ENCODE measurements at regions of chr2 and their contacts with region 1.

Region 1: GRCh38 chr2:189661148-189661956 is at the start of gene ASNSD1:
- DNase-seq: peak; percentile 97
- ATAC-seq: peak; percentile 95
- H3K4me3 Mint-ChIP-seq: no peak within 1 kb of the TSS
- H3K27ac Mint-ChIP-seq: no peak within 1 kb of the TSS
- H3K4me1 Mint-ChIP-seq: peaks cover 25% of the 10 kb centered on the region
- H3K27me3 Mint-ChIP-seq: no peaks in the 10 kb centered on the region
- CTCF ChIP-seq: peak; percentile 97
- total RNA-seq, gene ASNSD1: 27.5 and 31.1 TPM in 2 replicates

Region 2: DNA sequence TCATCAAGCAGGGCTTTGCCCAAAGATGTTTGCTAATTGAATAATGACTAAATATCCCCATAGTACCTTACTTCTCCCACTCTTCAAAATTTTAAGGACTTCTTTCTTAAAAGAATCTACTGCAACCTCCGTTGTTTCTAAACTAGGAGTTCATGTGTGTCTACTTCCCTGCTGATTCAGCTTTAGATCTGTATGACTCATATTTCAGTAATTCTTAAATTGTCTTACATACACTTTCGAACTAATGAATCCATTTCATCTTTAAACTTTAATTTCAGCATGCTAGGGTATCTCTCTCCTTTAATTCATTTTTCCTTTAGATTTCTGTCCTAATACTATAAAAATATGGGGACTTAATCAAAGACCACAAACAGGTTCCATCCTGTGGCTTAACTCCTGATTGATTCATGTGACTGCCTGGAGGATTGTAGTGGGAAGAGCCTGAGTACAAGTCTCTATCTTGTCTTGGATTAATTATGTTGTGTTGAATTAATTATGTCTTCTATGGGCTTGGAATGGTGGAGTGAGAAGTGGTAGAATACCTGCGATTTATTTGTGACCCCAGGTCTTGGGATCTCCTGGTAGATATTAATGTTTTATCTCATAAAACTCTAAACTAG is 456.9 kb before region 1 on chr2:
- CTCF ChIA-PET with region 1: no interaction called
- POLR2A ChIA-PET with region 1: no interaction called
- intact Hi-C with region 1: no loop called
- DNase-seq: no peak
- ATAC-seq: no peak
- H3K4me3 Mint-ChIP-seq: no peak overlapping the region
- H3K27ac Mint-ChIP-seq: no peak overlapping the region
- H3K4me1 Mint-ChIP-seq: no peaks in the 10 kb centered on the region
- H3K27me3 Mint-ChIP-seq: no peaks in the 10 kb centered on the region
- CTCF ChIP-seq: no peak

Region 3: DNA sequence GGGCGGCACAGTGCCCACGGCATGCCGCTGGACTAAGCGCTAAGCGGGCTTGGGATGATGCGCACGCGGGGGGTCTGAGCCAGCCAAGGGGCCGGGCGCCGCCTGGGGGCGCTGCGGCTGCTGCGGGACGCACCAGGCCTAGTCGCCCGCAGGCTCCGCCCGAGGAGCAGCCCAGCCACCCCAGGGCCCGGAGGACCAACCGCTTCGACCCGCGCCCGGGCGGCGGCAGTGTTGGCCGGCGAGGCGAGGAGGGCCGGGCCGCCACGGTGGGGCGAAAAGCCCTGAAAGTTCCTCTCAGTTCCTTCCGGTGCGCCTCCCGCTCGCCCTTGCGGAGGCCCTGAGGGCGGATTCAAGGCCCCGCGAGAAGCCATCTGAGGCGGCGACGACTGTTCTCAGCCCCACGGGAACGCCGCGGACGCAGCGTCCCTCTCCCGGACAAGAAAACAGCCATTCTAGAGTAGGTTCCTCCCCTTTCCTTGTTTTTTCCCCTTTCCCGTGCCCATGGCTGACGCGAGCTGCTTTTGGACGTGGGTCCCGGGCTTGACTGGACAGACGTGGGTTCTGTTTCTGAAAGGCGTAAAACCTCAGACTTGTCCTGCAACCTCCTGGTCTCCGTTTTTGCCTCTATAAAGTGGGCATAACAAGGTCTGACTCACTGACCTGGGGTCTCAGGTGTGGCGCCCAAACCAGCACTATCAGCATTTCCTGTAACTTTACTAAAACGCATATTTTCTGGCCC is 13.2 kb after region 1 on chr2 and contains the start of gene ANKAR:
- CTCF ChIA-PET with region 1: interaction called, 52 read pairs
- POLR2A ChIA-PET with region 1: interaction called, 37 read pairs
- intact Hi-C with region 1: loop called (anchors 1 kb)
- DNase-seq: peak; percentile 89
- ATAC-seq: peak; percentile 97
- H3K4me3 Mint-ChIP-seq: peak within 1 kb of the TSS; percentile 96
- H3K27ac Mint-ChIP-seq: peak within 1 kb of the TSS; percentile 99
- H3K4me1 Mint-ChIP-seq: peaks cover 38% of the 10 kb centered on the region
- H3K27me3 Mint-ChIP-seq: no peaks in the 10 kb centered on the region
- CTCF ChIP-seq: peak; percentile 67
- total RNA-seq, gene ANKAR: 13.1 and 14.5 TPM in 2 replicates

Region 4: DNA sequence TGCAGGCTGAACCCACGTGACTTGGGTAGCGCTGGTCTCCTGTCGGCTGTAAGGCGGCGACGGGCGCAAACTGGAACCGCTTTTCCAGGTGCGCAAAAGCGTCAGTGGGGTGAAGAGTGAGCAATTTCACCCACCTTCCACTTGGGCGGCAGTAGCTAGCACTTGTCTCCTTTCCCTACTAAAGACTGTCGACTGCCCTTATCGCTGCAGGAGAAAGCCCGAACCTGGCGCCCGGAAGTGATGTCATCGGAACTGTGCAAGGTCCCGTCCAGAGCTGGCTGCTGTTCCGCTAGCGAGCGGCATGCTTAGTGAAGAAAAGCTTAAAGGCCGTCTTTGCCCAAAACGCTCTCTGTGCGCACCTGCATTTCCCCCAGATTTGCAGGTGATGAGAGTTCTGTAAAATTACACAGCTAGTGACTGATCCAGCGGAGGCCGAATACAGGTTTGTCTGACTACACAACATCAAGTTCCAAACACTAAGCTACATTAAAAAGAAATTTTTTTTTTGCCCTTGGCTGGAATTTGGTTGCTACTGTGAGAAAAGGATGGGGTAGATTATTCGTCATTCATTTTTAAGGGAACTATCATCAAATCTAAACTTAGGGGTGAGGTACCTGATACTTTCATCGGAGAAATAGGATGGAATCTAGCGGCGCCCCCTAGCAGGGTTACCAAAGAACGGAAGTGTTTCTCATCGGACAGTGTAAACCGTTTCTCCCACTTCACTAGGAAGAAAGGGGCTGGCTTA is 101.4 kb after region 1 on chr2 and contains the start of gene OSGEPL1:
- CTCF ChIA-PET with region 1: interaction called, 8 read pairs
- POLR2A ChIA-PET with region 1: interaction called, 16 read pairs
- intact Hi-C with region 1: loop called (anchors 1 kb)
- DNase-seq: peak; percentile 81
- ATAC-seq: peak; percentile 93
- H3K4me3 Mint-ChIP-seq: peak within 1 kb of the TSS; percentile 95
- H3K27ac Mint-ChIP-seq: peak within 1 kb of the TSS; percentile 97
- H3K4me1 Mint-ChIP-seq: peaks cover 8% of the 10 kb centered on the region
- H3K27me3 Mint-ChIP-seq: no peaks in the 10 kb centered on the region
- CTCF ChIP-seq: no peak
- total RNA-seq, gene OSGEPL1: 10.6 and 12.3 TPM in 2 replicates

Region 5: DNA sequence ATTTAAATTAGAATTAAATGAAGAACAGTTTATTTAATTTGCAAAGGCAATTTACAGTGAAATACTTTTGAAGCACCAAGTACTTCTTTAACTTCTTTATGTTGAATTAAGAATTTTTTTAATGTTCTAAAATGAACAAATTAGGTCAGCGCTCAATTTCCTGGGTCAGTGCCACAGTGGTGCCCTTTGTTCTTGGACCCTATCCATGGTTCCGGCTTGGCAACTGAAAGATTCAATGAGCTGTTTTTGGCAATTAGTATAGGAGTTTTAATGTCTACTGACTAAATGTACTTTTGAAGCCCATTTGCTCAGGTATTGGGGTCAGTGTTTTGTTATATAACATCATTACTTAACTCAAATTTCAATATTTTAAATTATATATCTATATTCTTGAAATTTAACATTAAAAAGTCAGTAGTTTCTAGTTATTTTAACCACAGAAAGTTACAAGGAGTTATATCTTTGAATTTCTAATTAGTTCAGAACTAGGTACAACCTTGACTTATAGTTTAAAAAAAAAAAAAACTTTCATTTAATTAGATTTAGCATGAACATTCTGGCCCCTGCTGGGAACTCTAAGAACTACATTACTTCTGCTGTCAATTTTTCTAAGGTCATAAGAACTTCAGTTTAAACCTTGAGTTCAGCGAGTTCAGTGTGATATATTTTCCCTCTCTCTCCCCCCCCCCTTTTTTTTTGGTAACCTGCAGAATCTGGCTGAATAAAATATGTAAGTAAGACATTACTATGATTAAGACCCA is 408.8 kb after region 1 on chr2:
- CTCF ChIA-PET with region 1: interaction called, 4 read pairs
- POLR2A ChIA-PET with region 1: no interaction called
- intact Hi-C with region 1: loop called (anchors 1 kb)
- DNase-seq: no peak
- ATAC-seq: peak; percentile 61
- H3K4me3 Mint-ChIP-seq: no peak overlapping the region
- H3K27ac Mint-ChIP-seq: no peak overlapping the region
- H3K4me1 Mint-ChIP-seq: no peaks in the 10 kb centered on the region
- H3K27me3 Mint-ChIP-seq: no peaks in the 10 kb centered on the region
- CTCF ChIP-seq: no peak

Region 6: GRCh38 chr2:190376591-190377245 is 715.4 kb after region 1 on chr2:
- CTCF ChIA-PET with region 1: no interaction called
- POLR2A ChIA-PET with region 1: no interaction called
- intact Hi-C with region 1: loop called (anchors 1 kb)
- DNase-seq: no peak
- ATAC-seq: no peak
- H3K4me3 Mint-ChIP-seq: no peak overlapping the region
- H3K27ac Mint-ChIP-seq: no peak overlapping the region
- H3K4me1 Mint-ChIP-seq: peaks cover 3% of the 10 kb centered on the region
- H3K27me3 Mint-ChIP-seq: no peaks in the 10 kb centered on the region
- CTCF ChIP-seq: no peak

Region 7: GRCh38 chr2:191150600-191151330 is 1489.4 kb after region 1 on chr2 and contains the start of gene STAT4:
- CTCF ChIA-PET with region 1: no interaction called
- POLR2A ChIA-PET with region 1: no interaction called
- intact Hi-C with region 1: loop called (anchors 5 kb)
- DNase-seq: peak; percentile 55
- ATAC-seq: peak; percentile 92
- H3K4me3 Mint-ChIP-seq: peak within 1 kb of the TSS; percentile 89
- H3K27ac Mint-ChIP-seq: peak within 1 kb of the TSS; percentile 79
- H3K4me1 Mint-ChIP-seq: peaks cover 30% of the 10 kb centered on the region
- H3K27me3 Mint-ChIP-seq: peaks cover 8% of the 10 kb centered on the region
- CTCF ChIP-seq: no peak
- total RNA-seq, gene STAT4: 15.1 and 16.5 TPM in 2 replicates

Measured in activated B cell treated with CpG ODN at 0.5 μM for 24 hours (primary cell).